ENCODE measurements at regions of chr12 and their contacts with region 1.

Region 1: DNA sequence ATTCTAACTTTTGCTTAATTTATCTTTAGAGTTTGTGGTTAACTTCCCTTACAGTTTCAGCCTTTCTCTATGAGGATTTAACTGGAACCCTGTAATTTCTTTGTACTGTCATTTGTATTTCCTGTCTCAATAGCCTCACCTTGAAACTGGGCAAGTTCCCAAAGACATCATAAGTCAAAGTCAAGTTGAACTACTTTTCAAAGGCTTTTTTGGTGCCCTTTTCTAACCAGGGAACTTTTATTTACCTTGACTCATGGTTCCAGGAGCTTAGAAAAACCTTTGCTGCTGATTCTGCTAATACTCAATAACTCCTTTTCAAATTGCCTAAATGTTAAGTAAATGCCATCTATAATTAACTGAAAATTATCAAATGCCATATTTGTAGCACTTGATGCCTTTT is 200.8 kb upstream of the KRR1 start:
- DNase-seq: peak; percentile 95
- ATAC-seq: peak; percentile 70
- H3K4me3 ChIP-seq: no peak overlapping the region
- H3K27ac ChIP-seq: no peak overlapping the region
- H3K4me1 ChIP-seq: peaks cover 93% of the 10 kb centered on the region
- H3K27me3 ChIP-seq: no peaks in the 10 kb centered on the region
- CTCF ChIP-seq: no peak
- EP300 ChIP-seq: peak in 1 of 2 experiments; percentile 90; a peak in 2 of 4 replicates
- POLR2A ChIP-seq: no peak
- RAD21 ChIP-seq: no peak

Region 2: GRCh38 chr12:75553398-75553797 is 158.9 kb before region 1 on chr12:
- CTCF ChIA-PET with region 1: no interaction called
- POLR2A ChIA-PET with region 1: no interaction called
- in situ Hi-C with region 1: no loop called
- intact Hi-C with region 1: loop called (anchors 5 kb)
- DNase-seq: no peak
- ATAC-seq: no peak
- H3K4me3 ChIP-seq: no peak overlapping the region
- H3K27ac ChIP-seq: no peak overlapping the region
- H3K4me1 ChIP-seq: peaks cover 41% of the 10 kb centered on the region
- H3K27me3 ChIP-seq: no peaks in the 10 kb centered on the region
- CTCF ChIP-seq: no peak
- EP300 ChIP-seq: no peak
- POLR2A ChIP-seq: no peak
- RAD21 ChIP-seq: no peak

Region 3: GRCh38 chr12:75635606-75636410 is 76.4 kb before region 1 on chr12:
- CTCF ChIA-PET with region 1: no interaction called
- POLR2A ChIA-PET with region 1: no interaction called
- in situ Hi-C with region 1: no loop called
- intact Hi-C with region 1: loop called (anchors 5 kb)
- DNase-seq: peak; percentile 97
- ATAC-seq: peak; percentile 98
- H3K4me3 ChIP-seq: no peak overlapping the region
- H3K27ac ChIP-seq: peak overlapping the region; percentile 66
- H3K4me1 ChIP-seq: peaks cover 56% of the 10 kb centered on the region
- H3K27me3 ChIP-seq: no peaks in the 10 kb centered on the region
- CTCF ChIP-seq: no peak
- EP300 ChIP-seq: peak; percentile 80 to 98
- POLR2A ChIP-seq: no peak
- RAD21 ChIP-seq: no peak

Region 4: GRCh38 chr12:75766263-75767160 is 54.3 kb after region 1 on chr12:
- CTCF ChIA-PET with region 1: no interaction called
- POLR2A ChIA-PET with region 1: interaction called, 3 read pairs
- in situ Hi-C with region 1: no loop called
- intact Hi-C with region 1: loop called (anchors 5 kb)
- DNase-seq: peak; percentile 97
- ATAC-seq: peak; percentile 92
- H3K4me3 ChIP-seq: peak overlapping the region in 1 of 3 experiments; percentile 3; a peak in 1 of 6 replicates
- H3K27ac ChIP-seq: peak overlapping the region; percentile 86
- H3K4me1 ChIP-seq: peaks cover 57% of the 10 kb centered on the region
- H3K27me3 ChIP-seq: no peaks in the 10 kb centered on the region
- CTCF ChIP-seq: no peak
- EP300 ChIP-seq: peak in 1 of 2 experiments; percentile 98; a peak in 2 of 4 replicates
- POLR2A ChIP-seq: no peak
- RAD21 ChIP-seq: peak; percentile 30; the same call in 1 of the 2 replicates

Measured in HepG2 (cell line).